ENCODE measurements at regions of chr22 and their contacts with region 1.

Region 1: GRCh38 chr22:50012716-50013181 is at the start of gene IL17REL:
- DNase-seq: no peak
- ATAC-seq: no peak
- H3K4me3 Mint-ChIP-seq: peak within 1 kb of the TSS; percentile 62
- H3K27ac Mint-ChIP-seq: peak within 1 kb of the TSS; percentile 72
- H3K4me1 Mint-ChIP-seq: peaks cover 31% of the 10 kb centered on the region
- H3K27me3 Mint-ChIP-seq: peaks cover 2% of the 10 kb centered on the region
- CTCF ChIP-seq: no peak
- total RNA-seq, gene IL17REL: 0.14 TPM in 1 of 2 experiments, not detected in the other

Region 2: DNA sequence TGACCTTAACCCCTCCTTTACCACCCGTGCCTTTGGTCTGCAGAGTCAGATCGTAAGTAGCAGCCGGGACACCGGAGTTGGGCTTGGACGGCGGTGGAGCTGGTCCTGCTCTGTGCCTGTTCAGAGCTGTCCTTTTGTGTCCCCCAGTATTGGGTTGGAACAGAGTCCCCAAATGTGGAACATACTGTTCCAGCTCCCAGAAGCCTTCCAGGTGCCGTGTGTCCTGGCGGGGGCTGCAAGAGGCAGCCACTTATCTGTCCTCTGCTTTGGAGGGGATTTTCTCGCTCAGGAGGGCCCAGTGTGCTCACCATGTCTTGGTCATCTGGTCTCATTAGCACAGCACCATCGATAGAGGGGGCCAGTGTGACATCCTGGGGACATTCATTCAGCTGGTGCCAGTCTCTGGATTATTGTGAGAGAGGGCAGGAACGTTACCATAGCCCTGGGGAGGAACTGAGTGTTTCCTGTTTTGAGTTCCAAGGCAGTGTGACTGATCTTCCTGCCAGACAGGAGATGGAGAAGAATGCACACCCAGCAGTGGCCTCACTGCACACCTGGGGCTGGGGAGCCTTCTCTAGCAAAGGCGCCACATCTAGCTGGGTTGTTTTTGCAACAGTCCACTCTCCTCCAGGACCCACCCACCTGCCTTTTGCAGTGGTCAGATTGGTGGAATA is 81.9 kb before region 1 on chr22:
- CTCF ChIA-PET with region 1: interaction called, 3 read pairs
- POLR2A ChIA-PET with region 1: no interaction called
- intact Hi-C with region 1: loop called (anchors 5 kb)
- DNase-seq: peak; percentile 76
- ATAC-seq: peak; percentile 32
- H3K4me3 Mint-ChIP-seq: no peak overlapping the region
- H3K27ac Mint-ChIP-seq: peak overlapping the region; percentile 27
- H3K4me1 Mint-ChIP-seq: peaks cover 37% of the 10 kb centered on the region
- H3K27me3 Mint-ChIP-seq: no peaks in the 10 kb centered on the region
- CTCF ChIP-seq: peak; percentile 51

Region 3: GRCh38 chr22:49979587-49980264 is 33.0 kb before region 1 on chr22:
- CTCF ChIA-PET with region 1: interaction called, 12 read pairs
- POLR2A ChIA-PET with region 1: interaction called, 4 read pairs
- intact Hi-C with region 1: loop called (anchors 5 kb)
- DNase-seq: peak; percentile 67
- ATAC-seq: peak; percentile 7
- H3K4me3 Mint-ChIP-seq: peak overlapping the region; percentile 7
- H3K27ac Mint-ChIP-seq: peak overlapping the region; percentile 72
- H3K4me1 Mint-ChIP-seq: peaks cover 42% of the 10 kb centered on the region
- H3K27me3 Mint-ChIP-seq: peaks cover 5% of the 10 kb centered on the region
- CTCF ChIP-seq: peak; percentile 65

Region 4: GRCh38 chr22:49992921-49993648 is 19.7 kb before region 1 on chr22:
- CTCF ChIA-PET with region 1: interaction called, 16 read pairs
- POLR2A ChIA-PET with region 1: interaction called, 3 read pairs
- intact Hi-C with region 1: no loop called
- DNase-seq: peak; percentile 84
- ATAC-seq: peak; percentile 97
- H3K4me3 Mint-ChIP-seq: no peak overlapping the region
- H3K27ac Mint-ChIP-seq: no peak overlapping the region
- H3K4me1 Mint-ChIP-seq: peaks cover 8% of the 10 kb centered on the region
- H3K27me3 Mint-ChIP-seq: peaks cover 3% of the 10 kb centered on the region
- CTCF ChIP-seq: peak; percentile 84

Region 5: GRCh38 chr22:50044485-50045118 is 31.9 kb after region 1 on chr22:
- CTCF ChIA-PET with region 1: no interaction called
- POLR2A ChIA-PET with region 1: no interaction called
- intact Hi-C with region 1: no loop called
- DNase-seq: peak; percentile 49
- ATAC-seq: peak; percentile 76
- H3K4me3 Mint-ChIP-seq: no peak overlapping the region
- H3K27ac Mint-ChIP-seq: no peak overlapping the region
- H3K4me1 Mint-ChIP-seq: peaks cover 9% of the 10 kb centered on the region
- H3K27me3 Mint-ChIP-seq: peaks cover 19% of the 10 kb centered on the region
- CTCF ChIP-seq: no peak

Measured in activated CD8-positive, alpha-beta T cell treated with anti-CD3 and anti-CD28 coated beads for 36 hours (primary cell).